Activated B cell treated with CpG ODN at 0.5 μM for 24 hours (primary cell): ENCODE measurements at regions of chr5 and their contacts with region 1.

Region 1: DNA sequence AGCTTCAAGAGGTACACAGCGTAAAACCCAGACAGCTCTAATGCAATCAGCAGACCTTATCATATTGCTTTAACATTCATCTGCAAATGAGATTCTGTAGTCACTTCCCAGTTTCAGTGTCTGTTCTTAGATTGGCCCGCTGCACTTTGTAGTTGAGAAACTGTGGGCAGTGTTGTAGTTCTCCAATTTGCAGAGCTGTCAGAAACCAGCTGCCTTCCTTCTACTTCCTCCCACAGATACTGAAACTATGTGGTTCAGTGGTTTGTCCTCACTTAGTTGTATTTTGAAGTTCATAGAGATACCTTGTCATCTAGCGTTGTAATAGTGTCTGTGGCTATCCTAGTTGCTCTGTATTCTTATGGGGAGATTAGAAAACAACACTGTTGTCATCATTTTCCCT is 39.6 kb upstream of the TRIM36 start:
- DNase-seq: peak; percentile 21
- ATAC-seq: peak; percentile 98
- H3K4me3 Mint-ChIP-seq: peak overlapping the region; percentile 66
- H3K27ac Mint-ChIP-seq: peak overlapping the region; percentile 81
- H3K4me1 Mint-ChIP-seq: peaks cover 20% of the 10 kb centered on the region
- H3K27me3 Mint-ChIP-seq: no peaks in the 10 kb centered on the region
- CTCF ChIP-seq: no peak

Region 2: DNA sequence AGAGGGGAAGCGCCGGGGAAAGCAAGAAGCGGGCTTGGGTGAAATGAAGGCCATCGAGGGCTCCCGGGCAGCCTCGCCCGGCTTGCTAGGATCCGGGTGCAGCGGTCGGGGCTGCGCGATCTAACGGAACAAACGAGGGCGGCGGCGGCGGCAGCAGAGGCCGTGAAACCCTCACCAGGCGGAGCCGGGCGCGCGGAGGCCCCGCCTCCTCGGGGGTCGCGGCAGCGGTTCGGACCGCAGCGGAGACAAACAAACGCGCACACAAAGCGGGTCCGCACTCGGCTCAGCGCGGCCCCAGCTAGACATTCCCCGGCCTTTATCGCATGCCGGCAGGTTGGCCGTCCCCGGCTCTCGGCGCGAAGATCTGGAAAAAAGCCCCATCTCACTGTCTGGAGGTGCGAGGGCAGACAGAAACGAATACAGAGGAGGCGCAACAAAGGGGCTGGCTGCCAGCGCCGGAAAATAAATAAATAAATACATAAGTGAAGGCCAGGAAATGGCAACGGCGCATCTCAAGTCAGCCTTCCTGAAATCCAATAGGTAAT is 29.0 kb before region 1 on chr5:
- CTCF ChIA-PET with region 1: no interaction called
- POLR2A ChIA-PET with region 1: interaction called, 3 read pairs
- intact Hi-C with region 1: loop called (anchors 2 kb)
- DNase-seq: peak; percentile 49
- ATAC-seq: peak; percentile 79
- H3K4me3 Mint-ChIP-seq: peak overlapping the region; percentile 87
- H3K27ac Mint-ChIP-seq: no peak overlapping the region
- H3K4me1 Mint-ChIP-seq: peaks cover 11% of the 10 kb centered on the region
- H3K27me3 Mint-ChIP-seq: peaks cover 74% of the 10 kb centered on the region
- CTCF ChIP-seq: no peak

Region 3: GRCh38 chr5:115246361-115246991 is 37.2 kb after region 1 on chr5:
- CTCF ChIA-PET with region 1: interaction called, 4 read pairs
- POLR2A ChIA-PET with region 1: no interaction called
- intact Hi-C with region 1: loop called (anchors 1 kb)
- DNase-seq: no peak
- ATAC-seq: peak; percentile 31
- H3K4me3 Mint-ChIP-seq: no peak overlapping the region
- H3K27ac Mint-ChIP-seq: no peak overlapping the region
- H3K4me1 Mint-ChIP-seq: peaks cover 21% of the 10 kb centered on the region
- H3K27me3 Mint-ChIP-seq: no peaks in the 10 kb centered on the region
- CTCF ChIP-seq: peak; percentile 79

Region 4: GRCh38 chr5:115262321-115263077 is 53.2 kb after region 1 on chr5 and contains the start of gene PGGT1B:
- CTCF ChIA-PET with region 1: no interaction called
- POLR2A ChIA-PET with region 1: interaction called, 8 read pairs
- intact Hi-C with region 1: loop called (anchors 1 kb)
- DNase-seq: peak; percentile 63
- ATAC-seq: peak; percentile 91
- H3K4me3 Mint-ChIP-seq: peak within 1 kb of the TSS; percentile 99
- H3K27ac Mint-ChIP-seq: peak within 1 kb of the TSS; percentile 96
- H3K4me1 Mint-ChIP-seq: peaks cover 52% of the 10 kb centered on the region
- H3K27me3 Mint-ChIP-seq: no peaks in the 10 kb centered on the region
- CTCF ChIP-seq: no peak
- total RNA-seq, gene PGGT1B: 52.1 and 52.9 TPM in 2 replicates

Region 5: GRCh38 chr5:115480245-115480644 is 271.0 kb after region 1 on chr5:
- CTCF ChIA-PET with region 1: no interaction called
- POLR2A ChIA-PET with region 1: no interaction called
- intact Hi-C with region 1: no loop called
- DNase-seq: no peak
- ATAC-seq: no peak
- H3K4me3 Mint-ChIP-seq: no peak overlapping the region
- H3K27ac Mint-ChIP-seq: no peak overlapping the region
- H3K4me1 Mint-ChIP-seq: no peaks in the 10 kb centered on the region
- H3K27me3 Mint-ChIP-seq: peaks cover 2% of the 10 kb centered on the region
- CTCF ChIP-seq: no peak

Region 6: GRCh38 chr5:115601701-115602590 is 392.7 kb after region 1 on chr5 and contains the start of gene TICAM2:
- CTCF ChIA-PET with region 1: interaction called, 3 read pairs
- POLR2A ChIA-PET with region 1: no interaction called
- intact Hi-C with region 1: loop called (anchors 1 kb)
- DNase-seq: peak; percentile 68
- ATAC-seq: peak; percentile 80
- H3K4me3 Mint-ChIP-seq: peak within 1 kb of the TSS; percentile 88
- H3K27ac Mint-ChIP-seq: peak within 1 kb of the TSS; percentile 98
- H3K4me1 Mint-ChIP-seq: peaks cover 56% of the 10 kb centered on the region
- H3K27me3 Mint-ChIP-seq: no peaks in the 10 kb centered on the region
- CTCF ChIP-seq: no peak
- total RNA-seq, gene TICAM2: 12.4 and 13.3 TPM in 2 replicates

Region 7: DNA sequence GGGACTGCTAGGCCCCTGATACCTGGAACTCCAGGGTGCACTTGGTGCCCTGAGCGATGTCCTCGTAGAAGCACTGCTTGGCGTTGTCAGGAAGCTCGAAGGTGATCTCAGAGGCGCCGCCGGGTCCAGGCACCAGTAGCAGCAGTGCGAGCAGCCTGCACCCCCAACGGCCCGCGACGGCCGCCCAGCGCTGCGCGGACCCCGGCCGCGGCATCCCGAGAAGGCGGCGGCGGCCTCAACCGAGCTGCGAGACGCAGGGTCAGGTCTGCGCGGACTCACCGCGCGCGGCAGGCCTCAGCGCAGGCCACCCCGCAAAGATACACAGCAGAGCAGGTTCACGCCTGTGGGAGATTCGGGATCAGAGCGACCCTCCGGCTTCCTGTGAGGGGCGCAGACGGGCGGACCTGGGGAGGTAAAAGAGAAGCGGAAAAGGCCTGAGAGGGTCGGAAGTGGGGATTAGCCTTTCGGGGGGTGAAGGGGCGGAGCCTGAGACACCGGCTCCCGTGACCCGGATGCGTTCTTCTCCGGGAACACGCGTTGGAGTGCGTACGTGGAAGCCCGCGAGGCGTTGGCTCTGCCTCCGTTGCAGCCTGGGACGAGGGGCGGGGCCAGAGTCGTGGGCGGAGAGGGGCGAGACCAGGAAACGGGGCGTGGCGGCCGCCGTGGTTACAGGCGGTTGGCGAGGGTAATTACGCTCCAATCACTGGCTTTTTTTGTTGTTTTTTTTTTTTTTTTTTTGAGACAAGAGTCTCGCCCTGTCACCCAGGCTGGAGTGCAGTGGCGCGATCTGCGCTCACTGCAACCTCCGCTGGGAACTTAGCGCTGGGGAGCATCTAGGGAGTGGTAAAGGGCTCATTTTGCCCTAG is 416.5 kb after region 1 on chr5 and contains the start of gene TMED7:
- CTCF ChIA-PET with region 1: no interaction called
- POLR2A ChIA-PET with region 1: no interaction called
- intact Hi-C with region 1: loop called (anchors 1 kb)
- DNase-seq: peak; percentile 99
- ATAC-seq: peak; percentile 92
- H3K4me3 Mint-ChIP-seq: no peak within 1 kb of the TSS
- H3K27ac Mint-ChIP-seq: peak within 1 kb of the TSS; percentile 93
- H3K4me1 Mint-ChIP-seq: peaks cover 29% of the 10 kb centered on the region
- H3K27me3 Mint-ChIP-seq: no peaks in the 10 kb centered on the region
- CTCF ChIP-seq: no peak
- total RNA-seq, gene TMED7: 34.9 and 35.0 TPM in 2 replicates

Region 8: GRCh38 chr5:116076496-116076895 is 867.2 kb after region 1 on chr5:
- CTCF ChIA-PET with region 1: no interaction called
- POLR2A ChIA-PET with region 1: no interaction called
- intact Hi-C with region 1: loop called (anchors 10 kb)
- DNase-seq: no peak
- ATAC-seq: peak; percentile 95
- H3K4me3 Mint-ChIP-seq: peak overlapping the region; percentile 76
- H3K27ac Mint-ChIP-seq: peak overlapping the region; percentile 88
- H3K4me1 Mint-ChIP-seq: peaks cover 29% of the 10 kb centered on the region
- H3K27me3 Mint-ChIP-seq: no peaks in the 10 kb centered on the region
- CTCF ChIP-seq: no peak